ENCODE measurements at regions of chr2 and their contacts with region 1.

Region 1: GRCh38 chr2:233251306-233252116 is at the start of gene ATG16L1:
- DNase-seq: peak; percentile 95
- H3K4me3 ChIP-seq: peak within 1 kb of the TSS; percentile 79 to 99 (median 92)
- H3K27ac ChIP-seq: peak within 1 kb of the TSS; percentile 70
- H3K4me1 ChIP-seq: peaks cover 34% of the 10 kb centered on the region
- H3K27me3 ChIP-seq: no peaks in the 10 kb centered on the region
- CTCF ChIP-seq: peak; percentile 75 to 96
- total RNA-seq, gene ATG16L1: 33.3 to 39.2 TPM

Region 2: GRCh38 chr2:232761301-232761907 is 490.1 kb before region 1 on chr2:
- CTCF ChIA-PET with region 1: no interaction called
- dilution Hi-C with region 1: no loop called
- in situ Hi-C with region 1: no loop called
- intact Hi-C with region 1: loop called (anchors 2 kb)
- DNase-seq: peak; percentile 39
- H3K4me3 ChIP-seq: no peak overlapping the region
- H3K27ac ChIP-seq: no peak overlapping the region
- H3K4me1 ChIP-seq: no peaks in the 10 kb centered on the region
- H3K27me3 ChIP-seq: no peaks in the 10 kb centered on the region
- CTCF ChIP-seq: peak; percentile 65 to 67

Region 3: DNA sequence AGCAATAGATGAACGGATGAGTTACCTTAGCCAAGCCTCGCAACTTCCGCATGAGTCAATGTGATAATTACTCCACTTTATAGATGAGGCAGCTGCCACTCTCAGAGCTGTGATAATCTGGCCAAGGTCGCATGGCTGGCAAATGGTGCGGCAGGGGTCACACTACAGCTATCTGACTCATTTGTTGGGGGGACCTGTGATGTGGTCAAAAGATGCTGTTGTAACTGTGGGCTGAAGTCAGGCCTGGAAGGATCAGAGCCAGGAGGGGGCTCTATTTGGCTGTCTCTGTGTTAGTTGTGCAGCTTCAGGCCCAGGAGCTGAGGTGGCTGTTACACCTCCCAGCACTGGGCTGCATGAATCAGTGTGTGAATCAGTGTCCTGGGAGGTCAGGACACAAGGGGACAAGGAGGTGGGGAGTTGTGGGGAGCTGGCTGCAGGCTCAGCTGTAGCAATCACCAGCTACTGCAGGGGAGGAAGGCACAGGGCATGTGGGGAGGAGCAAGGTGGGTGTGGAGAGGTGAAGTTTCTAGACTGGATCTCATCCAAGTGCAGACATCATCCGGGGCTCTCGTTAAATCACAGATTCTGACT is 271.5 kb before region 1 on chr2:
- CTCF ChIA-PET with region 1: interaction called, 3 read pairs
- dilution Hi-C with region 1: no loop called
- in situ Hi-C with region 1: no loop called
- intact Hi-C with region 1: loop called (anchors 1 kb)
- DNase-seq: peak; percentile 55
- H3K4me3 ChIP-seq: no peak overlapping the region
- H3K27ac ChIP-seq: no peak overlapping the region
- H3K4me1 ChIP-seq: peaks cover 22% of the 10 kb centered on the region
- H3K27me3 ChIP-seq: no peaks in the 10 kb centered on the region
- CTCF ChIP-seq: peak in 1 of 2 donors; percentile 34

Region 4: DNA sequence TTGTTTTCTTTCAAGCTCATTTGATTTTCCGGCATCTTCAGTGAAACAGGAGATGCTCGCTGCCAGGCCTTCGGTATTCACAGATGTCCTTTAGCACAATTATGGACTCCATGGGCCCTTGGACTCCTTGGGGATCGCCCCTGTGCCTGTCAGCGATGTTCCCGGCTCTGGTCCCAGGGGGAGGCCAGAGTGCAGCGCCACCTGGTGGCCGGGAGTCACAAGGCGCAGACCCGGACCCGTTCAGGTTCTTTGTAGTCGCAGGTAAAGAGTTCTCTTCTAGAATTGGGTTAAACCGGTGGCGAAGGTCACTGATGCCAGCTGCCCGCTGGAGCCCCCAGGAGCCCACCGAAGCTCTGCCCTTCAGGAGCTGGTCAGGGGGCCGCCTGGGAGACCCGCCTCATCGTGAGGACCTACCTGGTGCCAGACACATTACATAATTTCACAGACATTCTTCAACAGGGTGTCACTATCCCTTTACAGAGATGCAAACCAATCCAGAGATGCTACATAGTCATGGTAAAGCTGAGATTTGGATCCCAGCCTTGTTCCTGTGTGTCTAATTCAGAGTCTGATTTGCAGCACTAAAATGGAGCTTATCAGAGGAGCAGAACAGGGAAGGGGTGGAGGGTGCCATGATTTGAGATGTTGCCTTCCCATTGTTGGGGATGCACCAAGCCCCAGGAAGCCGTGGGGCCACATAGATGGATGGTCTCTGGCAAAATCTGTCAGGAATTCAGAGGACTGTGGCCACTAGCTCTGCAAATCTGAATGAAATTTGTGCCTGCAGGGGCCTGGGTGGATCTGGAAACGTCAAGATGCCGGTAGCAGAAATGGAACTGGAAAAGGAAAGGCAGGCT is 197.4 kb before region 1 on chr2:
- CTCF ChIA-PET with region 1: no interaction called
- dilution Hi-C with region 1: no loop called
- in situ Hi-C with region 1: no loop called
- intact Hi-C with region 1: loop called (anchors 1 kb)
- DNase-seq: peak; percentile 35
- H3K4me3 ChIP-seq: no peak overlapping the region
- H3K27ac ChIP-seq: no peak overlapping the region
- H3K4me1 ChIP-seq: peaks cover 7% of the 10 kb centered on the region
- H3K27me3 ChIP-seq: no peaks in the 10 kb centered on the region
- CTCF ChIP-seq: peak; percentile 74 to 92

Region 5: GRCh38 chr2:233165895-233166661 is 85.4 kb before region 1 on chr2:
- CTCF ChIA-PET with region 1: no interaction called
- dilution Hi-C with region 1: no loop called
- in situ Hi-C with region 1: no loop called
- intact Hi-C with region 1: loop called (anchors 1 kb)
- DNase-seq: peak; percentile 57
- H3K4me3 ChIP-seq: no peak overlapping the region
- H3K27ac ChIP-seq: no peak overlapping the region
- H3K4me1 ChIP-seq: peaks cover 16% of the 10 kb centered on the region
- H3K27me3 ChIP-seq: no peaks in the 10 kb centered on the region
- CTCF ChIP-seq: no peak

Region 6: DNA sequence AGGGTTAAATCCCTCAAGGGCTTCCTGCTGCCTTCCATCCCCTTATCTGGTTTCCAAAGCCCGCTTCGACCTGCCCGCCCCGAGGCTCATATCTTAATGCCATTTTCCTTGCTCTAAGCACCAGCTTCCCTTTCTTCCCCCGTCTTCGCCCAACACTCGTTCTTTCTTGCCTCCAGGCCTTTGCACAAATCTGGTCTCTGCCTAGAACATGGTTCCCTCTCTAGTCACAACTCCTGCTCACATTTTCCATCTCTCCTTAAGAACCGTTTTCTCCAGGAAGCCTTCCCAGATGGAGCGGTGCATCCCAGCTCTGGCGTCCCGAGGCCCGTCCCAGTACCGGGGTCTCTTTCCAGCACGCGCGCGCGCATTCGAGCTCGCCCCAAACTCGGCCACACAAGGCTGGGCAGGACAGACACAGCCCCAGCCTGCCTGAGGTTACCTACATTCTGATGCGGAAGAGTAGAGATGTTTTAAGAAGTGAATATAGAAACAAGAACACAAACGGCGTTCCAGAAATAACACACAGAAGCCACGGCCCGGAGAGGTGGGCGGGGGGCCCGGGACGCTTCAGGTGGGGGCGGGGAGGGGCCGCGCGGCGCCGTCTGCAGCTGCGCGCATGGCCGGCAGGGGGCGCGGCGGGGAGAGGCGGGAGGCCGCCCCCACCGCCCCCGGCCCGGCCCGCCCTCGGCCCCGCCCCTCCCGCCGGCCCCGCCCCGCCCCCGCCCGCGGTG is 102.4 kb after region 1 on chr2 and contains the start of gene DGKD:
- CTCF ChIA-PET with region 1: no interaction called
- dilution Hi-C with region 1: loop called (anchors 5 kb)
- in situ Hi-C with region 1: no loop called
- intact Hi-C with region 1: no loop called
- DNase-seq: peak; percentile 9
- H3K4me3 ChIP-seq: peak within 1 kb of the TSS; percentile 66 to 70 (median 69)
- H3K27ac ChIP-seq: peak within 1 kb of the TSS; percentile 36
- H3K4me1 ChIP-seq: peaks cover 29% of the 10 kb centered on the region
- H3K27me3 ChIP-seq: no peaks in the 10 kb centered on the region
- CTCF ChIP-seq: no peak
- total RNA-seq, gene DGKD: 9.2 to 17.1 TPM